ENCODE measurements at regions of chr12 and their contacts with region 1.

Region 1: DNA sequence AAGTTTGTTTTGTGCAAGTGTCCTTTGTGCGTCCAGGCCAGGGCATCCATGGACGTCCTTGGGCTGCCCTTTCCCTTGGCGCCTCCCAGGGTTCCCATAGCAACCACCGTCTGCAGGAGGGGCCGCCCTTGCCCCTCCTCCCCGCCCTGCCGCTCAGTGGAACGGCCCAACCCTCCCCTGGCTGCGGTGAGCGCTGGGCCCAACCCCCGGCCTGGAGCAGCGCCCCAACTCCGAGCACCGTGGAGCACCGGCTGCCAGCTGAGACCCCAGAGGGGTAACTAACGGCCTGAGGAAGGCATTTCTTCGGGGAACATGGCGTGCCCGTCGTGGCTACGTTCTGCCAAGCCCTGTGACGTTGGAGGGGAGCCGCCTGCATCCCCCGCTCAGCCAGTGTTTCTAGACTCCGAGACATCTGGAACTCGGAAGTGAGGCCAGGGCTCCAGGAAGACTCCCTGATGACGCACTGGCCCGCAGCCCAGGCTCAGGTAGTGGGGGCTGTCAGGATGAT is 5.3 kb upstream of the ACACB start:
- DNase-seq: no peak
- H3K4me3 ChIP-seq: peak overlapping the region; percentile 69
- CTCF ChIP-seq: no peak

Region 2: DNA sequence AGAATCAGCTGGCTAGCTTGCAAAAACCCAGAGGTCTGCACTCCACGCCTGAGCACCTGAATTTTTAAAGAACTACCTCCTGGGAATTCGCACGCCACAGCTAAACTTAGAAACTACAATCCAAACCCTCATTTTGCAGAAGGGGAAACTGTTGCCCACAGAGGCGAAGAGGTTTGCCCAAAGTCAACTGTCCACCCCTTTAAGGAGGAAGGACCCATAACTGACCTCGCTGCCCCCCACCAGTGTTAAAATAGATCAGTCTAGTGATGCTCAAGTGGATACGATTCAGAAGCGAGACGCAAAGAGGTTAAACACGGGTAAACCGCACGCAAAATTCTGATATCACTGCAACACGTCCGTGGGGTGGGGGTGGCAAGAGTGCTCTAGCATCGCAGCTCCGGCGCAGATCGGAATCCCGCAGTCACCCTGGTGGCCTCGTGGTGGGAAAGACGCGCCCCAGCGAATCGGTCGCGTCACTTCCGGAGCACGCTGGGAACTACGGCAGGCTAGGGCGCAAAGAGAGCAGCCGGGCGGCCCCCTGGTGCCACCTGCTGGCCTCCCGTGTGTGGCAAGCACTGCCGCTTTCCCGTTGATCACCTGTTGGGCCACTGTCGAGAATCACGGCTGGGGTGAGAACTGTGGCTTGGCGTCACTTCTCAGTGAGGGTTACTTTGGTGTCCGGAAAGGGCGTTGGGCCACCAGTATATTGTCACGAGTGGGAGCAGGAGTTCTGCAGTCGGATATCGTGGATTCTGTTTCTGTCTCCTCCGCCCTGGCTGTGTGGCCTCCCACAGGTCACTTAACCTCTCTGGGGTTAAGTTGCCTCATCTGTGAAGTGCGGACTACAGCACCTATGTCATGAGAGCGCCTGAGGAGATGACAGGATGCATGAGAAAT is 17.8 kb before region 1 on chr12 and contains the start of gene ALKBH2:
- CTCF ChIA-PET with region 1: interaction called, 61 read pairs
- POLR2A ChIA-PET with region 1: interaction called, 3 read pairs
- DNase-seq: peak; percentile 34
- H3K4me3 ChIP-seq: peak within 1 kb of the TSS; percentile 78
- CTCF ChIP-seq: peak; percentile 99

Region 3: DNA sequence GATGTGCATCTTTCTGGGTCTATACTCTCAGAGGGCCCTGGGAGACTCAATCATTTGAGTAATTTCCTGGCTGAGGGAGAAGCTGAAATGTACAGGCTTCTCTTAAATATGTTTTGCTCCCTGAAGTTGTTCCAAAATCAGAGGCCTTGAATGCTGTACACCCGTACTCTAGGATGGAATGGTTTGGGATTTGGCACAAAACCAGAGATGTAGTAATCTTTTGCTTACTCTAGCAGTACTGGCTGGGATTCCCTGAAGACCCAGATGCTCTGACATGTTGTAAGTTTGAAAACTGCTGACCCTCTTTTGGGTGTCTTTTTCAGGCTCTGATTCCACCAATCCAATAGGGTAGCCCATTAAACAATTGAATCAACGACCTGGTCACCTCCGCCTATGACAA is 15.7 kb after region 1 on chr12:
- CTCF ChIA-PET with region 1: interaction called, 27 read pairs
- POLR2A ChIA-PET with region 1: no interaction called
- DNase-seq: no peak
- H3K4me3 ChIP-seq: no peak overlapping the region
- CTCF ChIP-seq: no peak

Region 4: GRCh38 chr12:109377139-109377685 is 266.2 kb after region 1 on chr12:
- CTCF ChIA-PET with region 1: interaction called, 23 read pairs
- POLR2A ChIA-PET with region 1: no interaction called
- DNase-seq: no peak
- H3K4me3 ChIP-seq: no peak overlapping the region
- CTCF ChIP-seq: no peak

Region 5: DNA sequence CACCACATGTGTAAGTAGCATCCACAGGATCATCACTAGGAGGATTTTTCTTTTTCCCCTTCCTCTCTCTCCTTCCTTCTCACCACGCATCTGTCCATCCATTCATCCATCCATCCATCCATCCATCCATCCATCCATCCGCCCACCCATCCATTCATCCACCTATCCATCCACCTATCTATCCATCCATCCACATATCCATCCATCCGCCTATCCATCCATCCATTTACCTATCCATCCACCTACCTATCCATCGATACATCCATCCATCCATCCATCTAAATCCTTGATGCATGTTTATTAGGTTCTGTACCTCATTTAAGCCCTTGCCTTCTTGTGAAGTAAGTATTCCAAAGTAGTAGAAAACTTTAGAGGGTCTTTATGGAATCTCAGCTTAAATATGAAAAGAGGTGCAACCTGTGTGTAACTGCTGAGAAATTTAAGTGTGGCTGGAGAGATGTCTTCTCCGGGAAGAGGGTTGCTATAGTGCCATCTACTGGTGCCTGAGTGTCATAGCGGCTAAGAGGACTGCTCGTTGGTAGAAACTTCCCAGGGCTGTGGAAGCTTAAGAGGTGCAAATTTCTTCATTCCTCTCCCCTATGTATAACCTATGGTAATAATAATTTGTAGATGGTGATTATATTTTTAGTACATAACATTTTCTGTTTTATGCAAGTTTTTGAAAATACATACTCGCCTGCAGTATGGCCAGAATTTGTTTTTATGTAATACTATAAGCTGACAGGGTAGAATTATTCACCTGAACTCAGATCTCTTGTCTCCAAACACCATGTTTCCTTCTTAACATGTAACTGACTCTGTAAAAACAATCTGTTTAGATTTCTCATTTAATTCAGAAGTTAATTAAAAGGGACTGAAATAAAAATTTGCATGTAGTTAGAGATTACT is 282.6 kb after region 1 on chr12:
- CTCF ChIA-PET with region 1: interaction called, 81 read pairs
- POLR2A ChIA-PET with region 1: no interaction called
- DNase-seq: no peak
- H3K4me3 ChIP-seq: no peak overlapping the region
- CTCF ChIP-seq: peak; percentile 82

Measured in AG04449 (cell line).